ENCODE measurements at regions of chr3 and their contacts with region 1.

Region 1: DNA sequence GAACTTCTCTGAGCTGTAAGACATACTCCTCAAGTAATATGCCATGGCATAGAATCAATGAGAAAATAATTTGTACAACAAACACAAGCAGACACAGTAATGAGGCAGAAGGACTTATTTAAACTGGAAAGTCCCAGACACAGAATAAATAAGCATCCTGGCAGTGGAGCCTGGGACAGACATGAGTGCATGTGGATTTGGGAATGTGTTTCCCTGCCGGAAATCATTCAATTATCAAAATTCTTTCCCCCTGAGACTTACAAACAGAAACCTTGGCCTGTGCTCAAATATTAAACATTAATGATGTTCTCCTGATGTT is 520.1 kb downstream of the ROBO1 start:
- DNase-seq: no peak

Region 2: GRCh38 chr3:78268716-78269668 is 978.7 kb before region 1 on chr3:
- intact Hi-C with region 1: no loop called
- DNase-seq: no peak

Region 3: GRCh38 chr3:78414261-78414660 is 833.4 kb before region 1 on chr3:
- intact Hi-C with region 1: loop called in 1 of 2 experiments (anchors 5 kb)
- DNase-seq: no peak

Region 4: GRCh38 chr3:79264892-79265291 is 17.2 kb after region 1 on chr3:
- intact Hi-C with region 1: no loop called
- DNase-seq: no peak